Naive thymus-derived CD4-positive, alpha-beta T cell (primary cell): ENCODE measurements at regions of chrX and their contacts with region 1.

Region 1: GRCh38 chrX:24285082-24285481 is 28.8 kb downstream of the SUPT20HL2 start:
- DNase-seq: no peak
- ATAC-seq: no peak
- H3K4me3 ChIP-seq: no peak overlapping the region
- H3K4me3 Mint-ChIP-seq: no peak overlapping the region
- H3K27ac ChIP-seq: no peak overlapping the region
- H3K27ac Mint-ChIP-seq: no peak overlapping the region
- H3K4me1 ChIP-seq: no peaks in the 10 kb centered on the region
- H3K4me1 Mint-ChIP-seq: peaks cover 0 to 4% (median 0%) of the 10 kb centered on the region in 7 donors
- H3K27me3 ChIP-seq: no peaks in the 10 kb centered on the region
- H3K27me3 Mint-ChIP-seq: peaks cover 0 to 8% (median 0%) of the 10 kb centered on the region in 5 donors

Region 2: GRCh38 chrX:24245201-24245600 is 39.9 kb before region 1 on chrX:
- CTCF ChIA-PET with region 1: no interaction called
- POLR2A ChIA-PET with region 1: no interaction called
- intact Hi-C with region 1: no loop called
- DNase-seq: no peak
- ATAC-seq: no peak
- H3K4me3 ChIP-seq: no peak overlapping the region
- H3K4me3 Mint-ChIP-seq: no peak overlapping the region
- H3K27ac ChIP-seq: no peak overlapping the region
- H3K27ac Mint-ChIP-seq: no peak overlapping the region
- H3K4me1 ChIP-seq: no peaks in the 10 kb centered on the region
- H3K4me1 Mint-ChIP-seq: no peaks in the 10 kb centered on the region
- H3K27me3 ChIP-seq: no peaks in the 10 kb centered on the region
- H3K27me3 Mint-ChIP-seq: peaks cover 0 to 4% (median 0%) of the 10 kb centered on the region in 5 donors

Region 3: DNA sequence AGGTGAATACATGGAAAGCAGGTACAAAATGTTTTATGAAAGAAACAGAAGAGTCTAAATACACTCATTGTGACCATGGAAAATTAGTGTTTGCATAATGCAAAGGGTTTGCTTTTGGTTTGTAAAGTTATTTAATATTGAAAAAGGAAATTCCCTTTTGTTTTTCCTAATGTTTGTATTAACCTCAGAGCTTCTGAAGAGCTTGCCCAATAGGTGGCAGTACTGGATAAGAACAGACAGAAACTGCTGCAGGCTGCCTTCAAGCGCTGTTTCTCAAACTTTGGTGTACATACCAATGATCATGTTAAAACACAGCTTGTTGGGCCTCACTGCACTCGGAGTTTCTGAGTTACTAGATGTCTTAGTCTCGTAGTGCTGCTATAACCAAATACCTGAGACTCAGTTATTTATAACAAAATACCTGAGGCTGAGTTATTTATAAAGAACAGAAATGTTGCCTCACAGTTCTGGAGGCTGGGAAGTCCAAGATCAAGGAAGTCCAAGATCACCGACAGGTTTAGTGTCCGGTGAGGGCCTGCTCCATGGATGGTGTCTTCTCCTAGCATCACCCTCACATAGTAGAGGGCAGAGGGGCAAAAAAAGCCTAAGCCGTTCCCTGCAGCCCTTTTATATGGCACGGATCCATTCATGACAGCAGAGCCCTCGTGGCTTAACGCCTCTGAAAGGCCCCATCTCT is 25.4 kb before region 1 on chrX:
- CTCF ChIA-PET with region 1: no interaction called
- POLR2A ChIA-PET with region 1: no interaction called
- intact Hi-C with region 1: loop called in 1 of 2 experiments (anchors 1 kb)
- DNase-seq: peak in 5 of 9 donors; percentile 3 to 39 (median 6)
- ATAC-seq: peak; percentile 29
- H3K4me3 ChIP-seq: no peak overlapping the region
- H3K4me3 Mint-ChIP-seq: no peak overlapping the region
- H3K27ac ChIP-seq: no peak overlapping the region
- H3K27ac Mint-ChIP-seq: no peak overlapping the region
- H3K4me1 ChIP-seq: no peaks in the 10 kb centered on the region
- H3K4me1 Mint-ChIP-seq: peaks cover 9 to 27% (median 15%) of the 10 kb centered on the region in 7 donors
- H3K27me3 ChIP-seq: no peaks in the 10 kb centered on the region
- H3K27me3 Mint-ChIP-seq: peaks cover 0 to 2% (median 0%) of the 10 kb centered on the region in 5 donors